ENCODE measurements at regions of chrX and their contacts with region 1.

Region 1: GRCh38 chrX:52574416-52575275 is 57.8 kb upstream of the XAGE1B start:
- DNase-seq: peak; percentile 61
- ATAC-seq: peak; percentile 76
- H3K4me3 ChIP-seq: no peak overlapping the region
- H3K27ac ChIP-seq: no peak overlapping the region
- H3K4me1 ChIP-seq: no peaks in the 10 kb centered on the region
- H3K27me3 ChIP-seq: peaks cover 27% of the 10 kb centered on the region
- CTCF ChIP-seq: peak; percentile 63
- POLR2A ChIP-seq: no peak
- RAD21 ChIP-seq: peak; percentile 63

Region 2: DNA sequence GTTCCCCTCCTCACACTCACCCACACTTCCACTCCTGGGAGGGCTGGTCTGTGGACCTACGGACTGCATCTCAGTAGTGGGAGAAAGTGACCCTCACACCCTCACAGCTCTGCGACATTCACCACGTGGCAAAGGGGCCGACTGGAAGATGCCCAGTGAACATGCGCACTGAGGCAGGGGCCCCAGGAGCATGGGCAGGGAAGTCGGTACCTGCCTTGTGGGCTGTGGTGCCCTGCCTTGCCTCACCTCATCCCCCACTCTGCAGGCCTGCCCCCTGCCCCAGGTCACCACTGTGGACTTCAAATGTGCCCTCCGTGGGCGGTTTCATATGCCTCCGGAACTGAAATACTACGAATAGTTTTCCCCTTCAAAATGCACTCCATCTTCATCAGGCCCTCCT is 11.5 kb before region 1 on chrX:
- CTCF ChIA-PET with region 1: no interaction called
- POLR2A ChIA-PET with region 1: no interaction called
- dilution Hi-C with region 1: no loop called
- in situ Hi-C with region 1: no loop called
- intact Hi-C with region 1: no loop called
- DNase-seq: no peak
- ATAC-seq: no peak
- H3K4me3 ChIP-seq: no peak overlapping the region
- H3K27ac ChIP-seq: no peak overlapping the region
- H3K4me1 ChIP-seq: no peaks in the 10 kb centered on the region
- H3K27me3 ChIP-seq: peaks cover 15% of the 10 kb centered on the region
- CTCF ChIP-seq: no peak
- POLR2A ChIP-seq: no peak
- RAD21 ChIP-seq: no peak

Region 3: GRCh38 chrX:52995135-52996020 is 420.7 kb after region 1 on chrX:
- CTCF ChIA-PET with region 1: no interaction called
- POLR2A ChIA-PET with region 1: no interaction called
- dilution Hi-C with region 1: no loop called
- in situ Hi-C with region 1: loop called (anchors 25 kb)
- intact Hi-C with region 1: no loop called
- DNase-seq: peak; percentile 94
- ATAC-seq: peak; percentile 99
- H3K4me3 ChIP-seq: peak overlapping the region; percentile 85
- H3K27ac ChIP-seq: peak overlapping the region; percentile 97
- H3K4me1 ChIP-seq: 0 out of 2 replicates have a peak, but pooled peaks cover 2% of the 10 kb centered on the region
- H3K27me3 ChIP-seq: peaks cover 11% of the 10 kb centered on the region; the same call in 1 of the 2 replicates
- CTCF ChIP-seq: peak; percentile 64
- POLR2A ChIP-seq: no peak
- RAD21 ChIP-seq: peak; percentile 36; the same call in 1 of the 2 replicates